ENCODE measurements at regions of chrX and their contacts with region 1.

Region 1: DNA sequence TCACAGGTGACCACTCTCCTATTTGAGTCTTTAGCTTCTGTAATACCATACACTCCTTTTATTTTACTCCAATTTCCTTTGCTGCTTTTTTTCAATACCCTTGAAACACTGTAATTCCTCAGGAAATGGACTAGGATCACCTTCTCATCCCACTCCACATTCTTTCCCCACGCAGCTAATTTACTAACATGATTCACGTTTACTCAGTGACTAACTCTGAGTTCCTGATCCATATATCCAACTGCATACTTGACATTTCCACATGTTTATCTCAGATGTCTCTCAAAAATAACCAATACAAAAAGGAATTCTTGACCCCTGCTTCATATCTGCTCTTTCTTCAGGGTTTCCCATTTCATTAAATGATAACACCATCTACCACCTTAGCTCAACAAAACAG is 19.9 kb downstream of the RPS6KA6 start:
- DNase-seq: peak; percentile 2
- ATAC-seq: no peak
- H3K4me3 ChIP-seq: no peak overlapping the region
- H3K27ac ChIP-seq: no peak overlapping the region
- H3K4me1 ChIP-seq: no peaks in the 10 kb centered on the region
- H3K27me3 ChIP-seq: no peaks in the 10 kb centered on the region
- CTCF ChIP-seq: no peak

Region 2: DNA sequence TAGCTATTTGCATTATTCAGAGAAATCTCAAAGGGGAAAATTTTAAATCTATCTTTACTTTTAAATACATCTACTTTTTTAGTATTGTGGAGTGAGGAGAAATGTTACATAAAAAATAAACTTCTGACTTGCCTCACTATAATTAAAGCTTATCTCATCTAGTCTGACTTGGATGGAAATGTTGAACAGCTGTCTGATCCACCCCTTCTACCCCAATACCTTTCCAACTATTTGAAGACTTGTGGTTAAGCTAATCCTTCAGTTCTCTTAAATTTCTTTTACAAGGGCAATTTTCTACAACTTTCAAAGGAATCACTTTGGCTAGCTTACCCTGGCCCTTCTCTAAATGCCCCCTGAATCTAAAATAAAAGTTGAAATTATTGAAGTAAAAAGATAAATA is 37.2 kb after region 1 on chrX:
- CTCF ChIA-PET with region 1: no interaction called
- POLR2A ChIA-PET with region 1: no interaction called
- in situ Hi-C with region 1: no loop called
- intact Hi-C with region 1: loop called (anchors 2 kb)
- DNase-seq: no peak
- ATAC-seq: no peak
- H3K4me3 ChIP-seq: no peak overlapping the region
- H3K27ac ChIP-seq: no peak overlapping the region
- H3K4me1 ChIP-seq: no peaks in the 10 kb centered on the region
- H3K27me3 ChIP-seq: no peaks in the 10 kb centered on the region
- CTCF ChIP-seq: no peak

Measured in Panc1 (cell line).